ENCODE measurements at regions of chr5 and their contacts with region 1.

Region 1: GRCh38 chr5:172770675-172771438 is at the start of gene DUSP1:
- DNase-seq: peak; percentile 100
- ATAC-seq: peak; percentile 71
- total RNA-seq, gene DUSP1: 98.9 TPM

Region 2: GRCh38 chr5:172678902-172679301 is 92.0 kb before region 1 on chr5:
- intact Hi-C with region 1: no loop called
- DNase-seq: peak; percentile 90
- ATAC-seq: peak; percentile 91

Region 3: GRCh38 chr5:172714491-172715421 is 56.1 kb before region 1 on chr5:
- intact Hi-C with region 1: loop called (anchors 5 kb)
- DNase-seq: peak; percentile 83
- ATAC-seq: peak; percentile 69

Region 4: DNA sequence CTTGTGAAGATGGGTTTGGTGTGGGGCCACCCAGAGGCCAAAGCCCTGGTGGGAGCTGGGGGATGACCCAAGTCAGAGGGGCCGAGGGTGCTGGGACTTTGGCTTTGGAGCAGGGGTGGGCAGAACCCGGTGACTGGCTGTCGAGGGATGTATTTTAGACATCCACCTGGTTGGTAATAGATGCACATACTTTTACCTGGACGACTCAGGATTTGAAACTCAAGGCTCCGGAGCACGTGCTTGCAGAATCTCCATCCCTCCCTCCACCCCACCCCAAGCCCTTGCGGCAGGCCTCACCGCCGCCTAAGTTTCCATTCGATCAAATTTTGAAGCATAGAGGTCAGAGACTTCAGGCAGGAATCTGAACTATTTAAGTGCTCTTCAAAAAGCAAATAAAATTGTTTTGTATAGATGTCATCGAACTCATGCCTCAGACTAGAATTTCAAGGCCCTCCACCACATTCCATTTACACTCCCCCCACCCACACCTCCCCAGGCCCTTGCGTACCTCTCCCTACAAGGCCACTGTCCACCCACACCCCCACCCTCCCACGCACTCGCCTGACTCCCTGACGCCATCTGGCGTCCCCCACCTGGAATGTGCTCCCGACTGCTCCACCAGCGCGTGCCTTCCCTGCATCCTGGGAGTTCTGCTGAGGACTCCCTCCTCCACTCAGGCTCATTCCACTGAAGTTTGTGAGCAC is 131.8 kb after region 1 on chr5:
- intact Hi-C with region 1: loop called (anchors 10 kb)
- DNase-seq: peak; percentile 86
- ATAC-seq: peak; percentile 69

Measured in left ventricle myocardium superior (tissue), 1 donor.